T-cell (primary cell): ENCODE measurements at regions of chr2 and their contacts with region 1.

Region 1: GRCh38 chr2:46763861-46764260 is 151.7 kb downstream of the MCFD2 start:
- DNase-seq: no peak
- ATAC-seq: no peak
- H3K4me3 ChIP-seq: no peak overlapping the region
- H3K4me3 Mint-ChIP-seq: no peak overlapping the region
- H3K27ac ChIP-seq: no peak overlapping the region
- H3K27ac Mint-ChIP-seq: no peak overlapping the region
- H3K4me1 ChIP-seq: no peaks in the 10 kb centered on the region
- H3K4me1 Mint-ChIP-seq: peaks cover 0 to 4% (median 0%) of the 10 kb centered on the region in 3 donors
- H3K27me3 ChIP-seq: no peaks in the 10 kb centered on the region
- H3K27me3 Mint-ChIP-seq: no peaks in the 10 kb centered on the region

Region 2: GRCh38 chr2:46202987-46203386 is 560.9 kb before region 1 on chr2:
- CTCF ChIA-PET with region 1: interaction called in 1 of 2 experiments, 14 read pairs
- POLR2A ChIA-PET with region 1: no interaction called
- DNase-seq: no peak
- ATAC-seq: no peak
- H3K4me3 ChIP-seq: no peak overlapping the region
- H3K4me3 Mint-ChIP-seq: no peak overlapping the region
- H3K27ac ChIP-seq: no peak overlapping the region
- H3K27ac Mint-ChIP-seq: no peak overlapping the region
- H3K4me1 ChIP-seq: peaks cover 3 to 9% of the 10 kb centered on the region in 2 experiments
- H3K4me1 Mint-ChIP-seq: peaks cover 17 to 30% (median 30%) of the 10 kb centered on the region in 3 donors
- H3K27me3 ChIP-seq: no peaks in the 10 kb centered on the region
- H3K27me3 Mint-ChIP-seq: no peaks in the 10 kb centered on the region